ENCODE measurements at regions of chr21 and their contacts with region 1.

Region 1: DNA sequence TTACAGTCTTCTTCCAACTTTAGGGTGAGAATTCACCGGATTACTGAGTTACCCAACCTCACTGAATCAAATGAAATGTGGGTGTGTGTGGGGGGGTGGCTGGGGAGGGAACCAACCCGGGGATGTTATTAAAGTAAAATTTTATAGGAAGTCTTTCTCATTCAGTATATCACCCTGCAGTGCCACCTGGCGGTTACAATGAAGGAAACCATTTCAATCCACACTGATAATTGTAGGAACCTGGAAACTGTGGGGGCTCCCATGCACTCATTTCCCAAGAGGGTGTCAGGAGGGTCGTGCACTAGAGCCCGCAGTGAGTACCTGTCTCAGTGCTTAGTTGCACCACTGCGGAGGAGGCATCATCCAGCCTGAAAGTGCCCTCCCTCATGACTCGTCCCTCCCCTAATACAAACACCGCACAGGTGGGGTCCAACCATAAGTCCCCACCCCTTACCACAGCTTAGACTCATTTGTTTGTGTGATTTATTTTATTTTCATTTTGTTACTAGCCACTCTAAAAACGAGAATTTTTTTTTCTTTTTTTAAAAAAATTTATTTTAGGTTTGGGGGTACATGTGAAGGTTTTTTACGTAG is 29.1 kb upstream of the IGSF5 start:
- DNase-seq: peak; percentile 60
- H3K4me3 ChIP-seq: no peak overlapping the region
- H3K27ac ChIP-seq: no peak overlapping the region
- H3K4me1 ChIP-seq: no peaks in the 10 kb centered on the region
- CTCF ChIP-seq: peak; percentile 84

Region 2: GRCh38 chr21:39518138-39518846 is 197.6 kb before region 1 on chr21:
- CTCF ChIA-PET with region 1: no interaction called
- POLR2A ChIA-PET with region 1: interaction called, 3 read pairs
- intact Hi-C with region 1: loop called (anchors 1 kb)
- DNase-seq: peak; percentile 82
- H3K4me3 ChIP-seq: no peak overlapping the region
- H3K27ac ChIP-seq: no peak overlapping the region
- H3K4me1 ChIP-seq: no peaks in the 10 kb centered on the region
- CTCF ChIP-seq: peak; percentile 94

Region 3: GRCh38 chr21:39669976-39670661 is 45.8 kb before region 1 on chr21:
- CTCF ChIA-PET with region 1: no interaction called
- POLR2A ChIA-PET with region 1: no interaction called
- intact Hi-C with region 1: no loop called
- DNase-seq: no peak
- H3K4me3 ChIP-seq: no peak overlapping the region
- H3K27ac ChIP-seq: no peak overlapping the region
- H3K4me1 ChIP-seq: no peaks in the 10 kb centered on the region
- CTCF ChIP-seq: no peak

Region 4: DNA sequence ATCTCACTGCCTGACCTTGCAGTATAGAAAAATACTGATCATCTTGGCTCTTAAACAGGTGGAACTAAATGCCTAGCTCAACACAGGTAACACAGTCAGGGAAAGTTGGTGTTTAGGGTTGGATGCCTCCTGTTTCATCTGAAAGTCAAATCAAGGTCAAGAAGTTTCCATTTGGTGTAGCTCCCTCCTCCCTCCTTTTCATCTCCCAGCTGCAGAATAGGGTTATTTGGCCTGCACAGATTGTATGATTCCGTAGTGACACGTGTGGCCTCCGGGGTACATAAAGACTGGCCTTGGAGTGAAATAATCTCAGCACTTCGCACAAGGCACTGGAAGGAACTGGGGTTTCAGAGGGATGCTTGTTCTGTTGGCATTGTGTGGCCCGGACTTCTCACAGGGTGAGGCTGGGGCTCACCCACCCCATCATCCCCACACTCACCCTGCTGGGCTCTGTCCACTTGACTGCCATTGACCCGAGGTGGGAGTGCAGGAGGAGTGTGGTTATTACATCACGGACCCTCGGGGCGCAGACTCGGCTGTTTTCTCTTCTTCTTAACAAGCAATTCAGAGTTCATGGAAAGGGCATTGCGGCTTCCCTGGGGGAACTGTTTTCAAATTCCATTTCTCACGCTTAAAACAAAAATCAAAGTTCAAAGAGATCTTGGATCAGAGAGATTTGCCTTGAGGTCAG is 47.5 kb after region 1 on chr21:
- CTCF ChIA-PET with region 1: no interaction called
- POLR2A ChIA-PET with region 1: no interaction called
- intact Hi-C with region 1: no loop called
- DNase-seq: no peak
- H3K4me3 ChIP-seq: no peak overlapping the region
- H3K27ac ChIP-seq: no peak overlapping the region
- H3K4me1 ChIP-seq: no peaks in the 10 kb centered on the region
- CTCF ChIP-seq: no peak

Region 5: GRCh38 chr21:39885119-39885848 is 169.4 kb after region 1 on chr21:
- CTCF ChIA-PET with region 1: no interaction called
- POLR2A ChIA-PET with region 1: no interaction called
- intact Hi-C with region 1: no loop called
- DNase-seq: no peak
- H3K4me3 ChIP-seq: no peak overlapping the region
- H3K27ac ChIP-seq: no peak overlapping the region
- H3K4me1 ChIP-seq: no peaks in the 10 kb centered on the region
- CTCF ChIP-seq: no peak